B cell (primary cell): ENCODE measurements at regions of chr12 and their contacts with region 1.

Region 1: DNA sequence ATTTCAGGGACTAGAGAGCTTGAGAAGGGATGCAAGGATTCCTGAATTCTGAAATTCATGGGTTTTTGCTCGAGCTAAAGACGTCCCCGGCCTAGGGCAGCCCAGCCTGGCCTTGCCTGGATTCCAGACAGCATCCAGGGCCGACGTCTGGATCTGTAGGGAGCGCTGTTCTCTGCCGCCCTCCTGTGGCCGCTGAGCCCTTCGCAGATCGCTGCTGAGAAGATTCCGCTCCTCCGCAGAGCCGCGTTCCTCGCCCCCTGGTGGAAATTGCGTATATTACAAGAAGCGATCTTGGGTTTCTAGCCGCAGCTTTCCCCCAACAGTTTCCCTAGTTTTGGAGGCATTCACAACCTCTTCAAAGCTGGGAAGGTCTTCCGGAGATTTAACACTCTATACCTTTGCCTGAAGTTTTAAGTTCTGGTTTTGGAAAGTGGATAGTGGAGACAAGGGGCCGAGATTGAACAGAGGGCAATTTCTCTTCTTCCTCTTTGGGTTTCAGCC is 5.1 kb downstream of the CISTR start:
- DNase-seq: peak; percentile 90
- ATAC-seq: peak; percentile 70
- H3K4me3 ChIP-seq: no peak overlapping the region
- H3K4me3 Mint-ChIP-seq: peak overlapping the region; percentile 63
- H3K27ac ChIP-seq: no peak overlapping the region
- H3K27ac Mint-ChIP-seq: peak overlapping the region; percentile 47
- H3K4me1 ChIP-seq: peaks cover 33 to 43% of the 10 kb centered on the region in 2 donors
- H3K4me1 Mint-ChIP-seq: peaks cover 16% of the 10 kb centered on the region
- H3K27me3 ChIP-seq: peaks cover 0 to 64% (median 45%) of the 10 kb centered on the region in 4 experiments
- H3K27me3 Mint-ChIP-seq: peaks cover 50% of the 10 kb centered on the region
- CTCF ChIP-seq: peak; percentile 100

Region 2: DNA sequence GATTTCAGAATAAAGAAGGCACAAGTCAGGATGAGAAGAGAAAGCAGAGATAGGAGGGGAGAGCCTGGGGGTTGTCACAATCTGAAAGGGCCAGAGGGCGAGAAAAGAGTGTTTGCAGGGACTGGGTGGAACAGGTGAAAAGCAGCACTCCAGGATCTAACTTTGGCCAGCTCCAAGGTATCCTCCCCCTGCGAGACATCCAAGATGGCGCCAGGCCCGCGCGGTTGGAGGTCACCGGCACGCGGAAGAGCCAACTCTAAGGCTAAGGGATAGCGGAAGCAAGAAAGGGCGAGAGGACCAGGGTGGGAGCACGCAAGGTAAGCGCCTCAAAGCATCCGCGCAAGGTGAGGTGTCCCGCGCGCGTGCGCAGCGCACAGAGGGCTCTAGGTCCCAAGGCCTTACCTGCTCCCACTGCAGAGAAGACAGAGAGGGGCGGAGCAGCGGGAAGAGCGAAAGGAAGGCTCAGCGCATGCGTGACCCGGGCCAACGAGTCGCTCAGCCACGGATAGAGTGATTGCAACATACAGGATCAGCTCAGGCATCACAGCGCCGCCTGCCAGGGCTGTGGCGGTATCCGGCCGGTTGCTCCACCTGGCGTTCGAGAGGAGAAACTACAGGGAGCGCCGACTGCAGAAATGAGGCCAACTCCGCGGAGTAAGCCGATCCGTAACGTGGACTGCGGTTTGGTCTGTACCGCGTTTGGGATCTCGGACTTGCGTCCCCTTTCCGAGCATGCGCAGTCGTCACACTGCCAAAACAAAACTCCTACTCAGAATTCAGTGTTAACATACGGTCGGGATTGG is 70.8 kb before region 1 on chr12 and contains the start of gene ATP5MC2:
- CTCF ChIA-PET with region 1: interaction called, 18 read pairs
- POLR2A ChIA-PET with region 1: no interaction called
- intact Hi-C with region 1: loop called (anchors 1 kb)
- DNase-seq: peak; percentile 99
- ATAC-seq: peak; percentile 98
- H3K4me3 ChIP-seq: peak within 1 kb of the TSS; percentile 84 to 96 (median 91)
- H3K4me3 Mint-ChIP-seq: peak within 1 kb of the TSS; percentile 96
- H3K27ac ChIP-seq: peak within 1 kb of the TSS; percentile 69 to 76
- H3K27ac Mint-ChIP-seq: peak within 1 kb of the TSS; percentile 91
- H3K4me1 ChIP-seq: peaks cover 16 to 21% of the 10 kb centered on the region in 2 donors
- H3K4me1 Mint-ChIP-seq: peaks cover 29% of the 10 kb centered on the region
- H3K27me3 ChIP-seq: peaks cover 0 to 26% (median 16%) of the 10 kb centered on the region in 4 experiments
- H3K27me3 Mint-ChIP-seq: peaks cover 15% of the 10 kb centered on the region
- CTCF ChIP-seq: peak; percentile 99
- total RNA-seq, gene ATP5MC2: 205 and 212 TPM in 2 replicates

Region 3: DNA sequence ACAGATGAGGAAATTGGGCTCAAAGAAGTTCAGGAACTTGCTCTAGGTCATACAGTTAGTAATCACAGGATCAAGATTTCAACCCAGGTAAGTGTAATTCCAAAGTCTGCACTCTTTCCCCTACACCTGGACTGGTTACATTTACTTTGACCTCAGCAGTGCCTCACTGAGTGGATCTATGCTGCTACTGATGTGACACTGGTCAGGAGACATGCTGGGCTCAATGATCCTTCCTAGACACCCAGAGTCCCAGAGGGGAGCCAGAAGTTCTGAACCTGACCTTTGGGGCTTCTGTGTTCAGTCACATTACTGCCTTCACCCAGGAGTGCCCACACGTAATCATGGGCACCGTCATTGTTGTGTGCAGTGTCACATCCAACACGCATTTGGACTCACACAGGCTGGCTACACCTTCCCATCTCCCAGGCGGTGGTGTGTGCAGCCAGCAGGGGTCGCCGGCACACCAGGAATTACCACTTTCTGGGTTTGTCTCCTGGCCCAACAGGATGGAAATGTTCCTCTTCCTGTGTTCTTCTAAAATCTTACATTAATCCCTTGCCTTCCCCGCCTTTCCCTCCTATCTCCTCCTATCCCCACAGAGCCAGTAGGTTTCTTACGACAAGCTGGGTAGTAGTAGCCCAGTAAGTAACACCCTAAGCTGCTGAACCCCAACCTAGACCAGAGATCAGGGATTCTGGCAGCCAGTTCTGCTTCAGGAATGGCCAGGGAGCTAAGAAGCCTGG is 45.0 kb before region 1 on chr12:
- CTCF ChIA-PET with region 1: interaction called, 207 read pairs
- POLR2A ChIA-PET with region 1: no interaction called
- intact Hi-C with region 1: loop called (anchors 1 kb)
- DNase-seq: peak; percentile 77
- ATAC-seq: peak; percentile 81
- H3K4me3 ChIP-seq: no peak overlapping the region
- H3K4me3 Mint-ChIP-seq: no peak overlapping the region
- H3K27ac ChIP-seq: no peak overlapping the region
- H3K27ac Mint-ChIP-seq: no peak overlapping the region
- H3K4me1 ChIP-seq: peaks cover 5 to 9% of the 10 kb centered on the region in 2 donors
- H3K4me1 Mint-ChIP-seq: peaks cover 7% of the 10 kb centered on the region
- H3K27me3 ChIP-seq: peaks cover 0 to 55% (median 43%) of the 10 kb centered on the region in 4 experiments
- H3K27me3 Mint-ChIP-seq: peaks cover 74% of the 10 kb centered on the region
- CTCF ChIP-seq: peak; percentile 87

Region 4: GRCh38 chr12:53727310-53728041 is 19.2 kb before region 1 on chr12 and contains the start of gene CALCOCO1:
- CTCF ChIA-PET with region 1: interaction called, 254 read pairs
- POLR2A ChIA-PET with region 1: no interaction called
- intact Hi-C with region 1: loop called (anchors 1 kb)
- DNase-seq: peak; percentile 98
- ATAC-seq: peak; percentile 97
- H3K4me3 ChIP-seq: peak within 1 kb of the TSS; percentile 51 to 96 (median 85)
- H3K4me3 Mint-ChIP-seq: peak within 1 kb of the TSS; percentile 91
- H3K27ac ChIP-seq: peak within 1 kb of the TSS; percentile 60 to 61
- H3K27ac Mint-ChIP-seq: peak within 1 kb of the TSS; percentile 82
- H3K4me1 ChIP-seq: peaks cover 13 to 21% of the 10 kb centered on the region in 2 donors
- H3K4me1 Mint-ChIP-seq: peaks cover 22% of the 10 kb centered on the region
- H3K27me3 ChIP-seq: no peaks in the 10 kb centered on the region
- H3K27me3 Mint-ChIP-seq: peaks cover 11% of the 10 kb centered on the region
- CTCF ChIP-seq: no peak
- total RNA-seq, gene CALCOCO1: 171 and 179 TPM in 2 replicates

Region 5: DNA sequence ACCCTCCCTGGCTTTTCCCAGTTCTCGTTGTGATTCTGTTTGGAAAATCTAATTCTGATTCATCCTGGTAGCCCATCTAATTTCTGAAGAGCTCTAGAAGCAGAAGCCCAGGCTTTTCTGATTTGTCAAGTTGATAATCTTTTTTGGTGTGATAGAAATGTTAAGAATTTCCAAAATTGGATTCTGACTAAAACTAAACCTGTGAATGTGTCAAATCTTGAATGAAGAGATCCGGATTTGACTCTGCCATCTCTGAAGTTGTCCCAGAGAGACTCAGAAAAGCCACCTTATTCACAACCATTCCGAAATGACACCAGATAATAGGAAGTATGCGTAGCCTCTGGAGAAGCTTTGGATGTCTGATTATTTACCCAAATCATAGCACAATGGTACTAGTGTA is 18.0 kb after region 1 on chr12:
- CTCF ChIA-PET with region 1: interaction called, 191 read pairs
- POLR2A ChIA-PET with region 1: no interaction called
- intact Hi-C with region 1: no loop called
- DNase-seq: no peak
- ATAC-seq: no peak
- H3K4me3 ChIP-seq: no peak overlapping the region
- H3K4me3 Mint-ChIP-seq: no peak overlapping the region
- H3K27ac ChIP-seq: no peak overlapping the region
- H3K27ac Mint-ChIP-seq: no peak overlapping the region
- H3K4me1 ChIP-seq: no peaks in the 10 kb centered on the region
- H3K4me1 Mint-ChIP-seq: no peaks in the 10 kb centered on the region
- H3K27me3 ChIP-seq: peaks cover 0 to 50% (median 29%) of the 10 kb centered on the region in 4 experiments
- H3K27me3 Mint-ChIP-seq: peaks cover 56% of the 10 kb centered on the region
- CTCF ChIP-seq: no peak

Region 6: DNA sequence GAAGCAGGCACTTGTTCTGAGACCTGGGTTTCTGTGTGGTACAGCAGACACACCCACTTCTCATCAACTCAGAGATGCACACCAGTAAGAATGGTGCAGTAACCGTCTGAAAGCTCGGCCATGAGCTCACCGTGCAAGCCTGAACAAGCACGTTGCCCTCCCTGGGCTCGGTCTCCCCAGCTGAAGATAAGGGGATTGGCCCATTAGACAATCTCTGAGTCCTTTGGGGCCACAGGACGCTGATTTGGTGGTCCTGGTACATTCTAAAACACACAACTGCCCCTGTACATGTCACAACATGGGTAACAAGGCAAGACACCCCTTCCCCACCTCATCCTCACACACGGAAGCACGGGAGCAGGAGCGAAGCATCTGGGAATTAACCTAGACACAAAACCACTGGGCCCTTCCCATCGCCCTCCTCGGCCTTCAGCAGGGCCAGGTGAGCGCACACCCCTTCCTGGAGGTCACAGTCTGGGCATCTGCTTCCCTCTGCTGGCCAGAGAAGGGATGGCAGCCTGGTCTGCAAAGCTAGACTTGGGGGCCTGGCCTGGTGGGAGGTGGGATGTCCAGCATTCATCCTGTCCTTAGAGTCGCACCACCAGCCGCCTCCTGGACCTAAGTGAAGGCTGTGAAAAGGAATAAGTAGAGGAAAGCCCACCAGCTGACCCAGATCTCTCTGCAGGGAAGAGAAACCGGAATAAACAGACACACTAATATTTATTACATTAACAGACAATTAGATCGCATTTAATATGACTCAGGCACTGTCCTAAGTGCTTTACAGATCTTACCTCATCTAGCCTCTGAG is 461.0 kb after region 1 on chr12:
- CTCF ChIA-PET with region 1: interaction called, 16 read pairs
- POLR2A ChIA-PET with region 1: no interaction called
- intact Hi-C with region 1: no loop called
- DNase-seq: peak; percentile 82
- ATAC-seq: peak; percentile 99
- H3K4me3 ChIP-seq: no peak overlapping the region
- H3K4me3 Mint-ChIP-seq: no peak overlapping the region
- H3K27ac ChIP-seq: no peak overlapping the region
- H3K27ac Mint-ChIP-seq: peak overlapping the region; percentile 67
- H3K4me1 ChIP-seq: peaks cover 0 to 4% of the 10 kb centered on the region in 2 donors
- H3K4me1 Mint-ChIP-seq: peaks cover 4% of the 10 kb centered on the region
- H3K27me3 ChIP-seq: peaks cover 0 to 70% (median 6%) of the 10 kb centered on the region in 4 experiments
- H3K27me3 Mint-ChIP-seq: peaks cover 44% of the 10 kb centered on the region
- CTCF ChIP-seq: peak; percentile 95